IMR-90 (cell line): ENCODE measurements at regions of chr15 and their contacts with region 1.

Region 1: GRCh38 chr15:67065444-67066093 is at the start of gene SMAD3:
- DNase-seq: peak; percentile 95
- ATAC-seq: peak; percentile 86
- H3K4me3 ChIP-seq: peak within 1 kb of the TSS; percentile 96
- H3K27ac ChIP-seq: peak within 1 kb of the TSS; percentile 92
- H3K4me1 ChIP-seq: peaks cover 12% of the 10 kb centered on the region
- H3K27me3 ChIP-seq: no peaks in the 10 kb centered on the region
- CTCF ChIP-seq: peak; percentile 3; the same call in 1 of the 2 replicates
- POLR2A ChIP-seq: peak; percentile 97
- RAD21 ChIP-seq: peak; percentile 48
- total RNA-seq, gene SMAD3: 71.0 and 71.1 TPM in 2 replicates

Region 2: DNA sequence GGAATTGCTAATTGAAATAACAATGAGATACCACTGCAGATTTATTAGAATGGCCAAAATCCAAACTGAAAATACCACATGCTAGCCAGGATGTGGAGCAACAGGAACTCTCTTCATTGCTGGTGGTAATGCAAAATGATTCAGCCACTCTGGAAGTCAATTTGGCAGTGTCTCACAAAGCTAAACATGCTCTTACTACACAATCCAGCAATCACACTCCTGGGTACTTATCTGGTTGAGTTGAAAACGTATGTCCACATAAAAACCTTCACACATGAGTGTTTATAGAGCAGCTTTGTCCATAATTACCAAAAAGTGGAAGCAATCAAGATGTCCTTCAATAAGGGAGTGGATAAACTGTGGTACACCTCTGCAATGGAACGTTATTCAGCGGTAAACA is 250.2 kb before region 1 on chr15:
- CTCF ChIA-PET with region 1: no interaction called
- POLR2A ChIA-PET with region 1: no interaction called
- dilution Hi-C with region 1: no loop called
- in situ Hi-C with region 1: no loop called
- intact Hi-C with region 1: no loop called
- DNase-seq: peak; percentile 94
- ATAC-seq: peak; percentile 94
- H3K4me3 ChIP-seq: no peak overlapping the region
- H3K27ac ChIP-seq: peak overlapping the region; percentile 5; the same call in 1 of the 2 replicates
- H3K4me1 ChIP-seq: peaks cover 2% of the 10 kb centered on the region; the same call in 1 of the 2 replicates
- H3K27me3 ChIP-seq: no peaks in the 10 kb centered on the region
- CTCF ChIP-seq: no peak
- POLR2A ChIP-seq: no peak
- RAD21 ChIP-seq: peak; percentile 40

Region 3: GRCh38 chr15:66951531-66952320 is 113.8 kb before region 1 on chr15:
- CTCF ChIA-PET with region 1: interaction called, 4 read pairs
- POLR2A ChIA-PET with region 1: no interaction called
- dilution Hi-C with region 1: no loop called
- in situ Hi-C with region 1: loop called (anchors 5 kb)
- intact Hi-C with region 1: loop called (anchors 1 kb)
- DNase-seq: peak; percentile 42
- ATAC-seq: no peak
- H3K4me3 ChIP-seq: no peak overlapping the region
- H3K27ac ChIP-seq: no peak overlapping the region
- H3K4me1 ChIP-seq: peaks cover 3% of the 10 kb centered on the region
- H3K27me3 ChIP-seq: no peaks in the 10 kb centered on the region
- CTCF ChIP-seq: no peak
- POLR2A ChIP-seq: no peak
- RAD21 ChIP-seq: no peak

Region 4: DNA sequence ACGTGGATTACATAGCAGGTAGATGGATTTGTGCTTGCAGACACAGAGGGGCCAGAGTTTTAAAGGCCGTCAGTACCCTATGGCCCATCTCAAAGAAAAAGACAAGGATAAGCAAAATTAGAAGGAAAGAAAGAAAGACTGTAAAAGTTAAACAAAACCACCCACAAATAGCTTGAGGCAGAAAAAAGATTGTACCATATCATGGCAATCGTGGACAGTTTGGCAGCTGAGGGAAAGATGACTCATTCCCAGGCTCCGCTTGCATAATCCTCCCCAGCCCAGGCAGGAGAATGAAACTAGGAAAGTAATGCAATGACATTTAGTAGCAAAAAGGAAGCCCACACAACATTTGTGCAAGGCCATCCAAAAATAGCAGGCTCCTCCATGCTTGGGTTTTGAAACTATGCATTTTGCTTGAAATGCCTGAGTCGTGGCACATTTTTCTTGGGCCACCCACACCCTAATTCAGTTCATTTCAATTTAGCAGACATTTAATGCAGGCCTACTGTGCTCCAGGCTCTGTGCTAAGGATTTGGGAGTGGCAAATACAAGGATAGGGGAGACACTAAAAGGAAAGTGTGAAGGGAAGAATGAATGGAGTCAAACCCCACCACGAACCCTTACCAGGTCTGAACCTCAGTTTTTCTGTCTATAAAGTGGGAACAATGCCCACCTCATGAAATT is 41.1 kb before region 1 on chr15:
- CTCF ChIA-PET with region 1: no interaction called
- POLR2A ChIA-PET with region 1: interaction called, 3 read pairs
- dilution Hi-C with region 1: no loop called
- in situ Hi-C with region 1: no loop called
- intact Hi-C with region 1: loop called (anchors 1 kb)
- DNase-seq: peak; percentile 97
- ATAC-seq: peak; percentile 79
- H3K4me3 ChIP-seq: no peak overlapping the region
- H3K27ac ChIP-seq: peak overlapping the region; percentile 53
- H3K4me1 ChIP-seq: peaks cover 24% of the 10 kb centered on the region
- H3K27me3 ChIP-seq: no peaks in the 10 kb centered on the region
- CTCF ChIP-seq: no peak
- POLR2A ChIP-seq: no peak
- RAD21 ChIP-seq: no peak

Region 5: GRCh38 chr15:67125589-67126502 is 60.3 kb after region 1 on chr15:
- CTCF ChIA-PET with region 1: no interaction called
- POLR2A ChIA-PET with region 1: interaction called, 6 read pairs
- dilution Hi-C with region 1: no loop called
- in situ Hi-C with region 1: no loop called
- intact Hi-C with region 1: loop called (anchors 5 kb)
- DNase-seq: peak; percentile 100
- ATAC-seq: peak; percentile 77
- H3K4me3 ChIP-seq: peak overlapping the region; percentile 7; the same call in 1 of the 2 replicates
- H3K27ac ChIP-seq: peak overlapping the region; percentile 99
- H3K4me1 ChIP-seq: peaks cover 52% of the 10 kb centered on the region
- H3K27me3 ChIP-seq: no peaks in the 10 kb centered on the region
- CTCF ChIP-seq: no peak
- POLR2A ChIP-seq: peak; percentile 61
- RAD21 ChIP-seq: peak; percentile 32

Region 6: GRCh38 chr15:67175643-67176071 is 110.1 kb after region 1 on chr15:
- CTCF ChIA-PET with region 1: no interaction called
- POLR2A ChIA-PET with region 1: interaction called, 3 read pairs
- dilution Hi-C with region 1: no loop called
- in situ Hi-C with region 1: no loop called
- intact Hi-C with region 1: loop called (anchors 1 kb)
- DNase-seq: peak; percentile 69
- ATAC-seq: no peak
- H3K4me3 ChIP-seq: no peak overlapping the region
- H3K27ac ChIP-seq: peak overlapping the region; percentile 78
- H3K4me1 ChIP-seq: peaks cover 74% of the 10 kb centered on the region
- H3K27me3 ChIP-seq: no peaks in the 10 kb centered on the region
- CTCF ChIP-seq: no peak
- POLR2A ChIP-seq: no peak
- RAD21 ChIP-seq: no peak

Region 7: DNA sequence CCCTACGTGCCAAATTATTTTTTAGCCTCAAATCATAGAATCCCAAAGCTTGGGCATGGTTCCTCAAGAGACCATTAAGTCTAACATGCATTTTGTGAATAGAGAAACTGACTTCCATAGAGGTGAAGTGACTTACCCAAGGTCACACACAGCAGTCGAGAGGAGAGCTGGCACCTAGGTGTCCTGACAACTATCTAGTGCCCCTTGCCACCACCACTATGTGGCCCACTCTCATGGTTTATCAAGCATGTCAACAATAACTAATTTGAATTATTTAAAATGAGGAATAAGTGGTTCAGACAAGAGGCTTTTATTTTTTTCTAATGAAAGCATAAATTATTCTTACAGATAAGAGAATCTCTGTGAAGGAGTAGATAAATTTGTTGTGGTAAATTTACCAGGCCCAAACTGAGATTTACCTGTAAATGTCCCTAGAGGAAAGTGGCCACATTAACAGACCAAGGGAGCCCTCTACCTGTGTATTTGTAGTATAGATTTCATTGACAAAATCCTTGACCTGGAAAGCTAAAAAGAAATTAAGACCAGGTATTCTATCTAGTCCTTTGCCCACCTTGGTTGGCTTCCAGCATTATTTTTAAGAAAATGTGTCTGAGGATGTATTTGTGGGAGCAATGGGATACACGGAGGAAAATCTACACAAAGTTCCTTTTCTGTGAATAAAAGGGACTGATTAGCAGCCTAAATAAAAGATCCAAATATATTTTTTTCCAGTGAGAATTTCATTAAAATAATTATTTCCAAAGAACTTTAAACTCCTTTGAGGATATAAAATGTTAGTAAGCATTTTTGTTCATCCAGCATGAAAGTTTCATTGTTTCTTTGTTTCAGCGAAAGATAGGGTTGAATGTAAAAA is 238.2 kb after region 1 on chr15:
- CTCF ChIA-PET with region 1: no interaction called
- POLR2A ChIA-PET with region 1: no interaction called
- dilution Hi-C with region 1: no loop called
- in situ Hi-C with region 1: no loop called
- intact Hi-C with region 1: loop called (anchors 5 kb)
- DNase-seq: peak; percentile 55
- ATAC-seq: 0 out of 2 replicates have a peak, but pooled peaks have one; percentile 32
- H3K4me3 ChIP-seq: no peak overlapping the region
- H3K27ac ChIP-seq: no peak overlapping the region
- H3K4me1 ChIP-seq: peaks cover 2% of the 10 kb centered on the region; the same call in 1 of the 2 replicates
- H3K27me3 ChIP-seq: no peaks in the 10 kb centered on the region
- CTCF ChIP-seq: peak; percentile 59
- POLR2A ChIP-seq: no peak
- RAD21 ChIP-seq: peak; percentile 71

Region 8: DNA sequence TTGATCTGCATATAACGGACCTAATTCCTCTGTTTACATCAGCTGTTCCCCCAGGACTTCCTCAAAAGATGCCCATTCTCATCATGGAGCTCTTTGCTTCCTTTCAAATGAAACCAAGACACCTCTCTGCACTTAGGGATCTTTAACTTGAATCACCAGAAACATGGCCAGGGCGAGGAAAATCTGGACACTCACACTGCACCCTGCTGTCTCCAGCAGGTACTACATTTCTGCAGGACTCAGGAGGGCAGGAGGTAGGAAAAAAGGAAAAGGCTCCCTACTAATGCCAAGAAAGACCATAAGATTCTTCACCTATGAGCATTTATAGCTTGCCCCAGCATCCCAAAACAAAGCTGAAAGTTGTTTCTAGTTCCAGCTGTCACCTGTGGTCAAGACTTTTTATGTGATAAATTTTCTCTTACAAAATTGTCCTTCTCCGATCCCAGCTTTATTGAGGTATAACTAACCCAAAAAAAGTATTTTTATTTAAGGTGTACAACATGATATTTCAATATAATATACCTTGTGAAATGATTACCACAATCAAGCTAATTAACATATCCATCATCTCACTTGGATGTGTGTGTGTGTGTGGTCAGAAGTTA is 368.0 kb after region 1 on chr15:
- CTCF ChIA-PET with region 1: no interaction called
- POLR2A ChIA-PET with region 1: no interaction called
- dilution Hi-C with region 1: no loop called
- in situ Hi-C with region 1: loop called (anchors 10 kb)
- intact Hi-C with region 1: loop called (anchors 1 kb)
- DNase-seq: peak; percentile 59
- ATAC-seq: peak; percentile 99
- H3K4me3 ChIP-seq: no peak overlapping the region
- H3K27ac ChIP-seq: no peak overlapping the region
- H3K4me1 ChIP-seq: no peaks in the 10 kb centered on the region
- H3K27me3 ChIP-seq: no peaks in the 10 kb centered on the region
- CTCF ChIP-seq: peak; percentile 77
- POLR2A ChIP-seq: no peak
- RAD21 ChIP-seq: peak; percentile 79